ENCODE measurements at regions of chr16 and their contacts with region 1.

Region 1: GRCh38 chr16:13919683-13920509 is at the start of gene ERCC4:
- DNase-seq: peak; percentile 98
- H3K4me3 ChIP-seq: peak within 1 kb of the TSS; percentile 99
- H3K4me3 Mint-ChIP-seq: peak within 1 kb of the TSS; percentile 95
- H3K27ac Mint-ChIP-seq: peak within 1 kb of the TSS; percentile 94
- H3K4me1 ChIP-seq: no peaks in the 10 kb centered on the region
- H3K4me1 Mint-ChIP-seq: peaks cover 12% of the 10 kb centered on the region
- H3K27me3 ChIP-seq: no peaks in the 10 kb centered on the region
- H3K27me3 Mint-ChIP-seq: no peaks in the 10 kb centered on the region
- CTCF ChIP-seq: peak; percentile 80 to 92
- total RNA-seq, gene ERCC4: 6.8 and 7.1 TPM in 2 replicates

Region 2: DNA sequence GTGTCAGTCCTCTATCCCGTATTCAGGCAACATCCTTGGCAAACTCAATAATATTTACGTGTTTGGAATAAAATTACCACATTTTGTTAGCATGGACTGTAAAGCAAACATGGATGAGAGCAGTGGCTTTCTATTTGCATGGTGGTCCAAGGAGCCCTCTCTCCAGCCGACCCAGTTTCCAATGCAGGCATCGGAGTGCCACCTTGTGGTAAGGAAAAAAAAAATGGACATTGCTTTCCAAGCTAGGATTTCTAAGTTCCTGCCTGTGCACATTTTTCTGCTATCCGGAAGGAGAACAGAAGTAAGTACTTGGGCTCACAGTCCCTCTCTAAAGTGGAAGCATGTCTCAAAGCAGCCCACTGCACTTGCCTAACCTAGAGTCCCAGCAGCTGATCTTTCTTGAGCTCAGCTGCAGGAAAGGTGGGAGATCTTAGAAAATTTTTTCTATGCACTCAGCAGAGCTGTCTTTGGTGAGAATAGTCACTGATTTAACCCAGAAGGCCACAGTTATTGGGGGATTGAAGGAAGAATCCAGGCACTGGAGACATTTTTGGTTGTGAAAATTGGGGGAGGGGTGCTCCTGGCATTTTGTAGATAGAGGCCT is 46.0 kb before region 1 on chr16:
- CTCF ChIA-PET with region 1: interaction called, 11 read pairs
- POLR2A ChIA-PET with region 1: no interaction called
- intact Hi-C with region 1: no loop called
- DNase-seq: peak in 1 of 2 experiments; percentile 24
- H3K4me3 ChIP-seq: no peak overlapping the region
- H3K4me3 Mint-ChIP-seq: no peak overlapping the region
- H3K27ac Mint-ChIP-seq: no peak overlapping the region
- H3K4me1 ChIP-seq: no peaks in the 10 kb centered on the region
- H3K4me1 Mint-ChIP-seq: no peaks in the 10 kb centered on the region
- H3K27me3 ChIP-seq: no peaks in the 10 kb centered on the region
- H3K27me3 Mint-ChIP-seq: peaks cover 11% of the 10 kb centered on the region
- CTCF ChIP-seq: peak; percentile 44 to 47

Region 3: GRCh38 chr16:13957197-13958078 is 37.5 kb after region 1 on chr16:
- CTCF ChIA-PET with region 1: no interaction called
- POLR2A ChIA-PET with region 1: no interaction called
- intact Hi-C with region 1: loop called (anchors 5 kb)
- DNase-seq: peak; percentile 58 to 73
- H3K4me3 ChIP-seq: peak overlapping the region; percentile 17; the same call in 1 of the 2 replicates
- H3K4me3 Mint-ChIP-seq: peak overlapping the region; percentile 82
- H3K27ac Mint-ChIP-seq: peak overlapping the region; percentile 95
- H3K4me1 ChIP-seq: peaks cover 25% of the 10 kb centered on the region
- H3K4me1 Mint-ChIP-seq: peaks cover 29% of the 10 kb centered on the region
- H3K27me3 ChIP-seq: no peaks in the 10 kb centered on the region
- H3K27me3 Mint-ChIP-seq: no peaks in the 10 kb centered on the region
- CTCF ChIP-seq: no peak

Region 4: DNA sequence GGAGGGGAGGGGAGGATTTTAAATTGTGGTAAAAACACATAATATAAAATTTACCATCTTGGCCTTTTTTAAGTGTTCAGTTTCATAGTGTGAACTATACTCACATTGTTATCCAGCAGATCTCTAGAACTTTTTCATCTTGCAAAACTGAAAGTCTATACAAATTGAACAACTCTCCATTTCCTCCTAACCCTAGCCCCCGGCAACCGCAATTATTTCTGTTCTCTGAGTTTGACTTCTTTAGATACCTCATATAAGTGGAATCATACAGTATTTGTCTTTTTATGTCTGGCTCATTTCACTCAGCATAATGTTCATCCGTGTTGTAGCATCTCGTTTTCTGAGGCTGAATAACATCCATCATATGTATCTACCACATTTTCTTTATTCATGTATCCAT is 121.3 kb after region 1 on chr16:
- CTCF ChIA-PET with region 1: no interaction called
- POLR2A ChIA-PET with region 1: no interaction called
- intact Hi-C with region 1: no loop called
- DNase-seq: no peak
- H3K4me3 ChIP-seq: no peak overlapping the region
- H3K4me3 Mint-ChIP-seq: no peak overlapping the region
- H3K27ac Mint-ChIP-seq: no peak overlapping the region
- H3K4me1 ChIP-seq: no peaks in the 10 kb centered on the region
- H3K4me1 Mint-ChIP-seq: no peaks in the 10 kb centered on the region
- H3K27me3 ChIP-seq: no peaks in the 10 kb centered on the region
- H3K27me3 Mint-ChIP-seq: no peaks in the 10 kb centered on the region
- CTCF ChIP-seq: no peak

Region 5: DNA sequence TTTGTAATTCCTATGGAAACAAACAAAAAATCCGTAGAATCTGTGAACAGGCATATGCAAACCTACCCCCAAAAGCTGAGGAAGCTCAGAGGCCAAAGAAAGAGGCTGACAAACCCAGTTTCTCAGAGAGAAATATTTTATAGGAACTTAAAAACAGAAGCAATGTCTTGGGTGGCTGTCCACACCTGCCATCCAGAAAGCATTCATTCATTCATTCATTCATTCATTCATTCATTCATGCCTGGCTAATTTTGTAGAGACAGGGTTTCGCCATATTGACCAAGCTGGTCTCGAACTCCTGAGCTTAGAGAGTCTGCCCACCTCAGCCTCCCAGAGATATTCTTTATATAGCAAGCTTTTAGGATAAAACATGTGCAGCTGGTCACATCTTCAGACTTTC is 305.6 kb after region 1 on chr16:
- CTCF ChIA-PET with region 1: no interaction called
- POLR2A ChIA-PET with region 1: no interaction called
- intact Hi-C with region 1: no loop called
- DNase-seq: no peak
- H3K4me3 ChIP-seq: no peak overlapping the region
- H3K4me3 Mint-ChIP-seq: no peak overlapping the region
- H3K27ac Mint-ChIP-seq: no peak overlapping the region
- H3K4me1 ChIP-seq: peaks cover 9% of the 10 kb centered on the region
- H3K4me1 Mint-ChIP-seq: peaks cover 1% of the 10 kb centered on the region
- H3K27me3 ChIP-seq: no peaks in the 10 kb centered on the region
- H3K27me3 Mint-ChIP-seq: no peaks in the 10 kb centered on the region
- CTCF ChIP-seq: no peak

Region 6: GRCh38 chr16:14240219-14240843 is 320.4 kb after region 1 on chr16:
- CTCF ChIA-PET with region 1: interaction called, 5 read pairs
- POLR2A ChIA-PET with region 1: no interaction called
- intact Hi-C with region 1: loop called (anchors 2 kb)
- DNase-seq: peak; percentile 8 to 40
- H3K4me3 ChIP-seq: no peak overlapping the region
- H3K4me3 Mint-ChIP-seq: no peak overlapping the region
- H3K27ac Mint-ChIP-seq: peak overlapping the region; percentile 27
- H3K4me1 ChIP-seq: peaks cover 19% of the 10 kb centered on the region
- H3K4me1 Mint-ChIP-seq: peaks cover 10% of the 10 kb centered on the region
- H3K27me3 ChIP-seq: no peaks in the 10 kb centered on the region
- H3K27me3 Mint-ChIP-seq: no peaks in the 10 kb centered on the region
- CTCF ChIP-seq: no peak

Region 7: DNA sequence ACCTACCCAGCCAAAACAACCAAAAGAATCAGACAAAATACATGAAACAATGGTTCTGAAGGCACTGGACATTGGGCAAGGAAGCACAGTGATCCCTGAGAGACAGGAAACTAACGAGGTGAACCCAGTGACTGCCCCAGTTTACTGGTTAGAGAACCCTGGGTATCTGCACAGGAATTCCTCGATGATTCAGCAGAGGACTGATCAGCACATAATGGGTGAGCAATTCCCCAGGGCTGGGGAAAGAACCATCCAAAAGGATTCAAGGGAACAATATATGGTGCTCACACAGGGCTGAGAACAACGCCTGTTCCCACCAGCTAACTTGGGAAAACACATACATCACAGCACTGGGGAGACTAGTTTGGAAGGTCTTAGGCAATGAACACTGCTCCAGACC is 542.9 kb after region 1 on chr16:
- CTCF ChIA-PET with region 1: no interaction called
- POLR2A ChIA-PET with region 1: no interaction called
- intact Hi-C with region 1: no loop called
- DNase-seq: no peak
- H3K4me3 ChIP-seq: no peak overlapping the region
- H3K4me3 Mint-ChIP-seq: no peak overlapping the region
- H3K27ac Mint-ChIP-seq: no peak overlapping the region
- H3K4me1 ChIP-seq: no peaks in the 10 kb centered on the region
- H3K4me1 Mint-ChIP-seq: no peaks in the 10 kb centered on the region
- H3K27me3 ChIP-seq: no peaks in the 10 kb centered on the region
- H3K27me3 Mint-ChIP-seq: no peaks in the 10 kb centered on the region
- CTCF ChIP-seq: no peak